Activated CD4-positive, alpha-beta T cell treated with anti-CD3 and anti-CD28 coated beads for 36 hours (primary cell): ENCODE measurements at regions of chr1 and their contacts with region 1.

Region 1: DNA sequence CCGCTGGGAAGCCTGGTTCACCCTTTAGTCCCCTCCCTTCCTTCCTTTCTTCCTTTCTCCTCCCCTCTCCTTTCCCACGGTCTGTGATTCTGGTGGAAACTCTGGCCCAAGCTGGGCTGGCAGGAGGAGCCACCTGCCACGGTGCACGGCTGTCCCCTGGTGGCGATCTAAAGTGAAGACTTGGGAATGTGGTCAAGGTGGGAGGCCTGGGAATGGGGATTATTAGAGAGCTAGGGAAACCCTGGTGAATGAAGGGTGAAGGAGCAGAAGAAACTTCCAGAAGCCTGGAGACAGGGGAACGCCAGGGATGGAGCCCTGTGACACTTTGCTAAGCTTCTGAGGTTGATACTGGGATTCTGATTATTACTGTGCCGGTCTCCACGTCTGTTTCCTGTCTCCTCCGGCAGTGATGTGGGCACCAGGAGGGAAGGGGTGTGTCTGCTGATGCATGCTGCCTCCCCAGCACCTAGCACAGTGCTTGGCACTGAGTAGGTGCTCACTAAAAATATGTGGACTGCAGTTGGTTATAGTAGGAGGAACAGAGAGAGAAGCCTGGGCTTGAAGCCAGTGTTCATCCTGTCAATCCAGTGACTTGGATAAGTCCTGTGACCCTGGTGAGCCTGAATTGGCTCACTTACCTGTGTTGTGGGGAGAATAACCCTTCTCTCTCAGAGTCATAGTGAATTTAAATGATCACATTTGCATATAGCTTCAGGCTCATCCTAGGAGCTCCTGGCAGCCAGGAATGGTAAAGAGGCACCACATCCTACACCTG is 71.2 kb upstream of the NBPF3 start:
- DNase-seq: peak; percentile 75
- ATAC-seq: peak; percentile 87
- H3K4me3 Mint-ChIP-seq: peak overlapping the region; percentile 18
- H3K27ac Mint-ChIP-seq: peak overlapping the region; percentile 37
- H3K4me1 Mint-ChIP-seq: peaks cover 16% of the 10 kb centered on the region
- H3K27me3 Mint-ChIP-seq: no peaks in the 10 kb centered on the region

Region 2: GRCh38 chr1:21232044-21232443 is 136.7 kb before region 1 on chr1:
- CTCF ChIA-PET with region 1: interaction called, 23 read pairs
- POLR2A ChIA-PET with region 1: no interaction called
- intact Hi-C with region 1: loop called (anchors 1 kb)
- DNase-seq: peak; percentile 38
- ATAC-seq: no peak
- H3K4me3 Mint-ChIP-seq: no peak overlapping the region
- H3K27ac Mint-ChIP-seq: no peak overlapping the region
- H3K4me1 Mint-ChIP-seq: no peaks in the 10 kb centered on the region
- H3K27me3 Mint-ChIP-seq: no peaks in the 10 kb centered on the region

Region 3: DNA sequence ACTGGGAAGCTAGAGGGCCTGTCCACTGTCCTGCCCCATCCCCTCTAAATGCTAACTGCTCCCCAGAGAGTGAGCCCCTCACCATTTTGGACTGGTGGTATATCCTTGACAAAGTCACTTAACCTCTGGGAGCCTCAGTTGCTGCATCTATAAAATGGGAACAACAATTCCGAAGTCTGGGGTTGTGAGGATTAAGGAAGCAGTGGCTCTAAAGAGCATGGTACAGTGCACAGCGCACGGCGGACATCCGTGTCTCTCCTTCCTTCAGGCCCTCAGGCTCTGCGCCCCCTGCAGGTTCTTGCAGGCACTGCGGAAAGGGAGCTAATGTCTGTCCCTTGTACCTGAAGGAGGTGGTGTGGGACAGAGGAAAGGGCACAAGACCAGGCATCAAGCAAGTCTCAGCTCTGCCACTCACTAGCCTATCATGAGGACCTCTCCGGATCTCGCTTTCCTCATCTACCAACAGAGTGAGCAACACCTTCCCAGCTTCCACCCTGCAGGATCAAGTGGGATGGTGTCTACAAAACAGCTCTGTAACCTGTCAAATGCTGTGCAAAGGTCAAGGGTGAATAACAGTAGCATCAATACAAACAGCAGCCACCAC is 98.5 kb before region 1 on chr1:
- CTCF ChIA-PET with region 1: interaction called, 19 read pairs
- POLR2A ChIA-PET with region 1: no interaction called
- intact Hi-C with region 1: no loop called
- DNase-seq: peak; percentile 91
- ATAC-seq: peak; percentile 87
- H3K4me3 Mint-ChIP-seq: no peak overlapping the region
- H3K27ac Mint-ChIP-seq: peak overlapping the region; percentile 21
- H3K4me1 Mint-ChIP-seq: peaks cover 28% of the 10 kb centered on the region
- H3K27me3 Mint-ChIP-seq: no peaks in the 10 kb centered on the region

Region 4: GRCh38 chr1:21355956-21356355 is 12.7 kb before region 1 on chr1:
- CTCF ChIA-PET with region 1: interaction called, 15 read pairs
- POLR2A ChIA-PET with region 1: no interaction called
- intact Hi-C with region 1: no loop called
- DNase-seq: peak; percentile 76
- ATAC-seq: peak; percentile 97
- H3K4me3 Mint-ChIP-seq: no peak overlapping the region
- H3K27ac Mint-ChIP-seq: peak overlapping the region; percentile 29
- H3K4me1 Mint-ChIP-seq: peaks cover 11% of the 10 kb centered on the region
- H3K27me3 Mint-ChIP-seq: no peaks in the 10 kb centered on the region

Region 5: DNA sequence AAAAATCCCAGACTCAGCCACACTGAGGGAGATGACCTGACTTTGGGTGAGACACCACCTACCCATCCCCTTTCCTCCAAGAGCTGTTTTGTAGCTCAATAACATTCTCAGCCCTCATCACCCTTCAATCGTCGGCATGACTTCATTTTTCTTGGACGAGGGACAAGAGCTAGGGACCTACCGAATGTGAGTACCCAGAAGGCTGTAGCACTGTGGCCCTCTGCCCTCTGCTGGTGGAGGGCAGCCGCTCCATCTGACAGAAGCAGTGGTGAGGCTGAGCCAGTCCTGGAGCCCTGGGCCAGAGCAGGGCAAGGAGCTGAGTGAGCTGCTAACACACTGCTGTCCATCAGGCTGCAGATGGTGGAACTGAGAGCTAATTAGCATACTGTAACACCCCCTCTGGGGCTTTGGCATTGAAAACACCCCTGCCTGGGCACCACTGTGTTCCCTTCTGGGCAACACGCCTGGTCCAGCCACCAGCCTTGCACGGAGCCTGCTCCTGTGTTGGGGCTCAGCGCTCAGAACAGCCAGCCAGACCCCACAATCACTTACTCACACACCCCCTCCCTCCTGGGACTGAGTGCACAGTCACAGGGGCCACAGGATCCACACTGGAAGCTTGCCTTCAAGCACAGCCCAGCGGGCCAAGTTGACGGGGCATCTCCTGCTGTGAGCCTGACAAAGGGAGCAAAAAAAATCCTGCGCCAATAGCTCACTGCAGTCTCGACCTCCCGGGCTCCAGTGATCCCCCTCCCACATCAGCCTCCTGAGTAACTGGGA is 122.3 kb after region 1 on chr1:
- CTCF ChIA-PET with region 1: interaction called, 5 read pairs
- POLR2A ChIA-PET with region 1: interaction called, 4 read pairs
- intact Hi-C with region 1: loop called in 1 of 2 experiments (anchors 1 kb)
- DNase-seq: peak; percentile 63
- ATAC-seq: peak; percentile 67
- H3K4me3 Mint-ChIP-seq: no peak overlapping the region
- H3K27ac Mint-ChIP-seq: no peak overlapping the region
- H3K4me1 Mint-ChIP-seq: peaks cover 8% of the 10 kb centered on the region
- H3K27me3 Mint-ChIP-seq: peaks cover 10% of the 10 kb centered on the region

Region 6: DNA sequence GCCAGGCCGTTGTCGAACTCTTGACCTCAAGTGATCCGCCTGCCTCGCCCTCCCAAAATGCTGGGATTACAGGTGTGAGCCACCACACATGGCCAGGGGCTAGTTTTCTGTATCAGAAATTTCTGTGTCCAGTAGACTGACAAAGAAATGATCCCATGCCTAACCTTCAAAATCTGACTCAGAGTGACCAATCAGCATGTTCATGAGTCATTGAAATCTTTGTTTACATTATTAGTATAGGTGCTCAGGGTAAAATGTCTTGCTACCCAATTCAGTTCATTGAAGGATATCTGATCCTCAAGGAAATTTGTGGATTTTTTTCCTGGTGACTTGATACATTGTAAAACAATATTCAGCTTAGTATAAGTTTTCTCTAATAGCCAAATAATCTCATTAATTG is 432.4 kb after region 1 on chr1:
- CTCF ChIA-PET with region 1: no interaction called
- POLR2A ChIA-PET with region 1: no interaction called
- intact Hi-C with region 1: no loop called
- DNase-seq: no peak
- ATAC-seq: no peak
- H3K4me3 Mint-ChIP-seq: no peak overlapping the region
- H3K27ac Mint-ChIP-seq: no peak overlapping the region
- H3K4me1 Mint-ChIP-seq: no peaks in the 10 kb centered on the region
- H3K27me3 Mint-ChIP-seq: no peaks in the 10 kb centered on the region